ENCODE measurements at regions of chr7 and their contacts with region 1.

Region 1: DNA sequence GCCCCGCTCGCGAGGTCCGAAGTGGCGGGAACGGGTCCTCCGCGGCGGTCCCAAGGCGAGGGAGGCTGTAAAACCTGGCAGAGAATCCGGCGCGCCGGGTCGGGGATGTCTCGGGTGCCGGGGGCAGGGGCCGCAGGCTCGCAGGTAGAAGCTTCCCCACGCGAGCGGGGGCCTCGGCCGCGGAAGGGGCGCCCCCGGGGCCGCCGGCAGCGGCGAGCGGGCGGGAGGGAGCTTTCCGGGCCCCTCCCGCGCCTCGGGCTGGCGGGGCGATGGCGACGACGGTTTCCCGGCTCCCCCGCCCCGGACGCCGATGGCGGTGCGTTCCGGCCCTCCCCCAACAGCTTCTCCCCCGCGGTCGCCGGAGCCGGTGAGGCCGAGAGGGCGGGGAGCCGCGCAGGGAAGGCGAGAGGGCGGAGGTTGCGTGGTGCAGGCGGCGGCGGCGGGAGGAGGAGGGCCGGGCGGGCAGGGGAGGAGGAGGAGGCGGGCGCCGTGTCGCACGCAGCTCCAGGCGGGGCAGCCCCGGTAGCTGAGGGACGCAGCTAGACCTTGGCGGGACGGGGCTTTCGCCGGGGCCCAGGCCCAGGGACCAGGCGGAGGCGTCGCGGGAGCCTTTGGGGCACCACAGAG is at the start of gene CUL1:
- DNase-seq: peak; percentile 46
- ATAC-seq: peak; percentile 83
- H3K4me3 ChIP-seq: peak within 1 kb of the TSS; percentile 84 to 89 (median 88)
- H3K27ac ChIP-seq: peak within 1 kb of the TSS; percentile 98
- H3K4me1 ChIP-seq: peaks cover 47% of the 10 kb centered on the region
- H3K27me3 ChIP-seq: no peaks in the 10 kb centered on the region
- CTCF ChIP-seq: 0 out of 2 replicates have a peak, but pooled peaks have one; percentile 4
- EP300 ChIP-seq: no peak
- POLR2A ChIP-seq: peak; percentile 62 to 82
- RAD21 ChIP-seq: no peak
- total RNA-seq, gene CUL1: 45.9 and 80.4 TPM in 2 replicates

Region 2: GRCh38 chr7:148472406-148472805 is 226.1 kb before region 1 on chr7:
- CTCF ChIA-PET with region 1: no interaction called
- POLR2A ChIA-PET with region 1: no interaction called
- in situ Hi-C with region 1: no loop called
- intact Hi-C with region 1: no loop called
- DNase-seq: no peak
- ATAC-seq: no peak
- H3K4me3 ChIP-seq: no peak overlapping the region
- H3K27ac ChIP-seq: no peak overlapping the region
- H3K4me1 ChIP-seq: peaks cover 30% of the 10 kb centered on the region
- H3K27me3 ChIP-seq: no peaks in the 10 kb centered on the region
- CTCF ChIP-seq: no peak
- EP300 ChIP-seq: no peak
- POLR2A ChIP-seq: no peak
- RAD21 ChIP-seq: no peak

Region 3: DNA sequence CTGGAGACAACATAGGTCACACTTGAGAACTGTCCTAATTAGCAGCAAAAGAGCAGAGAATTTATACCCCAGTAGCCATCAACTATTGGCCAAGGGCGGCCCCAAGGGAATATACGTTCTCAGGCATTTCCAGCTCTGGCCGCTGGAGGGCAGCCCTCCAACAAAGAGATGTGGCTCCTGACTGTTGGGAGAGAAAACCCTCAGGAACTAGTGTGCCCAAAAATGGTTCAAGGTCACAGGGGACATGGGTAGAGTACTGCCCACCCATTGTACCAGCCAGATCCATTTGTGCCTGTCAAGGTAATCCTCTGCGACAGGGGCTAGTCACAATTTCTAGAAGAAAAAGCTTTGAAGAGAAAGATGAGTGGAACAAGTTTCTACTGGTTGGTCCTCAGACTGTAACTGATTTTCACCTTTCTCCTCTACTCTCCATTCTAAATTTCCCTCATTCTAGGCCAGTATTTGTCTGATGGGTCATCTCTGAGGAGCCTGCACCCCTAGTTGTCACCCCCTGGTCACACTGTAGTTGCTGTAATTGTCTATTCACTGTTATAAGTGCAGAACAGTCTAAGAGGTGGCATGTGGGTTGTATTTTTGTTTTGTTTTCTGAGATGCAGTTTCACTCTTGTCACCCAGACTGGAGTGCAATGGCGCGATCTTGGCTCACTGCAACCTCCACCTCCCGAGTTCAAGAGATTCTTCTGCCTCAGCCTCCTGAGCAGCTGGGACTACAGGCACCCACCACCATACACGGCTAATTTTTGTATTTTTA is 122.7 kb before region 1 on chr7:
- CTCF ChIA-PET with region 1: no interaction called
- POLR2A ChIA-PET with region 1: no interaction called
- in situ Hi-C with region 1: no loop called
- intact Hi-C with region 1: loop called (anchors 10 kb)
- DNase-seq: peak; percentile 39
- ATAC-seq: peak; percentile 95
- H3K4me3 ChIP-seq: no peak overlapping the region
- H3K27ac ChIP-seq: no peak overlapping the region
- H3K4me1 ChIP-seq: no peaks in the 10 kb centered on the region
- H3K27me3 ChIP-seq: no peaks in the 10 kb centered on the region; a peak in 1 of 5 replicates
- CTCF ChIP-seq: peak; percentile 85
- EP300 ChIP-seq: no peak
- POLR2A ChIP-seq: no peak
- RAD21 ChIP-seq: peak; percentile 70; the same call in 1 of the 2 replicates

Region 4: GRCh38 chr7:148598351-148598750 is 100.2 kb before region 1 on chr7:
- CTCF ChIA-PET with region 1: no interaction called
- POLR2A ChIA-PET with region 1: no interaction called
- in situ Hi-C with region 1: no loop called
- intact Hi-C with region 1: no loop called
- DNase-seq: no peak
- ATAC-seq: no peak
- H3K4me3 ChIP-seq: no peak overlapping the region
- H3K27ac ChIP-seq: no peak overlapping the region
- H3K4me1 ChIP-seq: no peaks in the 10 kb centered on the region
- H3K27me3 ChIP-seq: no peaks in the 10 kb centered on the region
- CTCF ChIP-seq: no peak
- EP300 ChIP-seq: no peak
- POLR2A ChIP-seq: no peak
- RAD21 ChIP-seq: no peak

Region 5: DNA sequence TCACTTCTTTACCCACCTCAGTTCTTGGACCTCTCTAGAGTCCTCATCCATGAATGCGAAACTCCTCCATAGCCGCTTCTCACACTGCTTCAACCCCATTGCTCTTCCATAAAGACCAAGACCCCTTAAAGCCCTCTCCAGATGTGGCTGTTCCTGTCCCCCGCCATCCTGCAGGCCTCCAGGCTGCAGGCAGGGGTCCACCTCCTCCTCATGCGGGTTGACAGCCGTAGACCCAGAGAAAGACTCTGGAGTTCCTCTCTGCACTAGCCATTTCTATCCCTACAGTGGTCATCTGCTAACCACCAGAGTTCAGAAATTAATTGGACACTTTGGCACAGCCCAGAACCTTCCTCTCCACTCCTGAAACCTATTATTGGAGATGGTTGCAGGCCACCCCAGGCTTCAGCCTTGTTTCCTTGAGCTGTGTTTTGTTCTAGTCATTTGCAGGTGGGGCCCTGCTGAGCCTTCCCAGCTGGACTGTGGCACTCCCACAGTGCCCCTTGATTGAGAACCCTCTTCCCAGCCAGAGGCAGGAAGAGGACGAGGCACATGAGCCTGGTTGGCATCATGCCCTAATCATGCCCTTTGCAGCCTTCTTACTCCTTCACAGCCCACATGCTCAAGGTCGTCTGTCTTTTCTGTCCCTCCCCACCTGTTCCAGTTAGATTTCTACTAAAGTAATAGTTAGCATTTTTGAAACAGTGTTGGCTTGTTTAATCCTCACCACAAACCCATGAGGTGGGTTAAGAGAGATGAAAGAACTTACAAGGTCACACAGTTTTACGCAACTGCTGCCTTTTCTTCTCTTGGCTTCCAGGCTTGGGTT is 24.0 kb after region 1 on chr7:
- CTCF ChIA-PET with region 1: no interaction called
- POLR2A ChIA-PET with region 1: interaction called, 6 read pairs
- in situ Hi-C with region 1: no loop called
- intact Hi-C with region 1: loop called (anchors 2 kb)
- DNase-seq: peak; percentile 72
- ATAC-seq: peak; percentile 80
- H3K4me3 ChIP-seq: no peak overlapping the region
- H3K27ac ChIP-seq: peak overlapping the region; percentile 35
- H3K4me1 ChIP-seq: peaks cover 58% of the 10 kb centered on the region
- H3K27me3 ChIP-seq: no peaks in the 10 kb centered on the region
- CTCF ChIP-seq: no peak
- EP300 ChIP-seq: peak in 1 of 2 experiments; percentile 32; a peak in 1 of 4 replicates
- POLR2A ChIP-seq: no peak
- RAD21 ChIP-seq: no peak

Region 6: DNA sequence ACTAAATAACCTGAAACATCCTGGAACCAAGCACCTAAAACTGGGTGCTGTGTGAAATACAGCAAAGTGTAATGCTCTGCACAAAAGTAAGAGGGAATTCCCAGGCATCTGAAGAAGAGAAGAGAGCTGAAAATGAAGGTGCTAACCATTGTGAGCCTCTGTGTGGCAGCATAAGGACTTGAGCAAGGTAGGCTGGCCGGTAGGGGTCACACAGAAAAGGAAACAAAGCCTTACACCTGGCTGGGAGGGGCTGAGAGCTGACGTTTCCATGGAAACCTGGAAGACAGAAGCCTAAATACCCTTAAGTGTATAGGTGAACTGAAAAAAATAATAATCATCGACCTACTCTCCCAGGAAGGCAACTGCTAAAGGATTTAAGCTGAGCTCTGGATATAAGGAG is 48.8 kb after region 1 on chr7:
- CTCF ChIA-PET with region 1: no interaction called
- POLR2A ChIA-PET with region 1: no interaction called
- in situ Hi-C with region 1: loop called (anchors 5 kb)
- intact Hi-C with region 1: no loop called
- DNase-seq: peak; percentile 32
- ATAC-seq: peak; percentile 69
- H3K4me3 ChIP-seq: no peak overlapping the region
- H3K27ac ChIP-seq: no peak overlapping the region
- H3K4me1 ChIP-seq: no peaks in the 10 kb centered on the region
- H3K27me3 ChIP-seq: no peaks in the 10 kb centered on the region
- CTCF ChIP-seq: peak; percentile 21; the same call in 1 of the 2 replicates
- EP300 ChIP-seq: no peak
- POLR2A ChIP-seq: no peak
- RAD21 ChIP-seq: no peak

Region 7: DNA sequence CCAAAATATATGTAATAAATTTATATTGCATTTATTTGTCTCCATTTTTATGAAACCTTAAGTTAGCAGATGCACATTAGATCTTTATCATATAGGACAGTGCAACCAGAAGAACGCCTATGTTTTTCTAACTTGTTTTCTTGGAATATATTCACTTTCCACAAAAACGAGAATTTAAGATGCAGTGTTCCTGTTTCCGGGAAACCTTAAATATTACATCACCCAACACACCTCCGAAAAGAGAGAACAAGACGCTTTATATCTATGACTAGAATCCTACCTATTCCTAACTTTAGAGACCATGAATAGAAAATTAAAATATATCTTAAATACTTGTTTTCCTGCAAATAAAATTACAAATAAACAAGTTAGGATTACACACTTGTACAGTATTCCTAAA is 183.7 kb after region 1 on chr7:
- CTCF ChIA-PET with region 1: no interaction called
- POLR2A ChIA-PET with region 1: no interaction called
- in situ Hi-C with region 1: no loop called
- intact Hi-C with region 1: no loop called
- DNase-seq: no peak
- ATAC-seq: no peak
- H3K4me3 ChIP-seq: peak overlapping the region; percentile 87 to 99 (median 98); a peak in 4 of 6 replicates
- H3K27ac ChIP-seq: peak overlapping the region; percentile 95
- H3K4me1 ChIP-seq: peaks cover 29% of the 10 kb centered on the region
- H3K27me3 ChIP-seq: no peaks in the 10 kb centered on the region
- CTCF ChIP-seq: no peak
- EP300 ChIP-seq: no peak
- POLR2A ChIP-seq: no peak
- RAD21 ChIP-seq: no peak

Measured in HepG2 (cell line).